ENCODE measurements at regions of chr5 and their contacts with region 1.

Region 1: GRCh38 chr5:109455598-109456096 is 45.9 kb upstream of the PJA2 start:
- DNase-seq: peak; percentile 54
- H3K4me3 Mint-ChIP-seq: peak overlapping the region; percentile 23
- H3K27ac Mint-ChIP-seq: peak overlapping the region; percentile 88
- H3K4me1 Mint-ChIP-seq: peaks cover 10% of the 10 kb centered on the region
- H3K27me3 Mint-ChIP-seq: peaks cover 10% of the 10 kb centered on the region

Region 2: GRCh38 chr5:108818613-108819272 is 636.9 kb before region 1 on chr5:
- CTCF ChIA-PET with region 1: no interaction called
- intact Hi-C with region 1: loop called (anchors 10 kb)
- DNase-seq: no peak
- H3K4me3 Mint-ChIP-seq: no peak overlapping the region
- H3K27ac Mint-ChIP-seq: no peak overlapping the region
- H3K4me1 Mint-ChIP-seq: peaks cover 3% of the 10 kb centered on the region
- H3K27me3 Mint-ChIP-seq: no peaks in the 10 kb centered on the region

Region 3: DNA sequence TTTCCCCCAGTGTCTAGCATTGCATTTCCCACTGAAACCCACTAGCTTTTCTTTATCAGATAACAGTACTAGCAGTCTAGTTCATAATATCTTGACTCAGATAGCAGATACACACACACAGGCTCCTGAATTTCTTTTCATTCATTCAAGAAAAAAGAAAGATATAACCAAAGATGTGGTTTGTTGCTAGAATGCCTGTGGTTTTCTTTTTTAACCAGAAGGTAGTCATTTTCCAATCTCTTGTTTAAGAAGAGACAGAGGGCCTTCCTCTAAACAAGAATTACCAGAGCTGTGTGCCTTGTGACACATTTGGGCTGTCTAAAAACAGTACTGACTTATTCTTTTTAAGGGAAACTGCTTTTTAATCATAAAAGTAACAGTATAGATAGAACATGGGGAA is 213.1 kb before region 1 on chr5:
- CTCF ChIA-PET with region 1: no interaction called
- intact Hi-C with region 1: loop called (anchors 5 kb)
- DNase-seq: peak; percentile 10
- H3K4me3 Mint-ChIP-seq: no peak overlapping the region
- H3K27ac Mint-ChIP-seq: no peak overlapping the region
- H3K4me1 Mint-ChIP-seq: peaks cover 5% of the 10 kb centered on the region
- H3K27me3 Mint-ChIP-seq: peaks cover 5% of the 10 kb centered on the region